A673 (cell line): ENCODE measurements at regions of chr16 and their contacts with region 1.

Region 1: GRCh38 chr16:89700100-89700648 is 1.3 kb downstream of the SPATA2L start:
- DNase-seq: peak; percentile 97
- H3K4me3 ChIP-seq: peak overlapping the region; percentile 80
- H3K27ac ChIP-seq: peak overlapping the region; percentile 76
- H3K4me1 ChIP-seq: peaks cover 10% of the 10 kb centered on the region
- H3K27me3 ChIP-seq: no peaks in the 10 kb centered on the region
- CTCF ChIP-seq: peak; percentile 52

Region 2: DNA sequence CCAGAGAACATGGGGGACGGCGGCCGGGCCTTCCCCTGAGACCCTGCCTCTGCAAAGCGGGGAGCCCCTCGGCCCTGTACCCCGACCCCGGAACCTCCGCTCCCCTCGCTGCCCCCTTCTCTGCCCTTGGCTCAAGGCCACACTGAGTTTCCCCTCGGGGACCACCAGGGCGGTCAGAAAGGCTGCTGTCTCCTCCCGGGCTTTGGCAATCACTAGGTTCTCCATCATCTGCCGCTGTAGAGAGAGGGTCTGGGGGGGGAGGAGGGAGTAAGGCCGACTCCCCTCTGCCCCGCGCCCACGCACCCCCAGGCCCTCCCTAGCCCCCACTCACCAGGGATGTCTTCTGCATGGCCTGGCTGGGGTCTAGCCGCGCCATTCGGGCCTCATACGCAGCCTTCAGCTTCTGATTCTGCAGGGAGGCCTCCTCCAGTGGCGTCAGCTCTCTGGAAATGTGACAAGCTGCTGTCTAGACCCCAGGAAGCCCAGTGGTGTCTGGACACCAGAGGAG is 12.2 kb after region 1 on chr16:
- CTCF ChIA-PET with region 1: interaction called, 7 read pairs
- POLR2A ChIA-PET with region 1: interaction called, 20 read pairs
- intact Hi-C with region 1: no loop called
- DNase-seq: no peak
- H3K4me3 ChIP-seq: peak overlapping the region; percentile 98
- H3K27ac ChIP-seq: peak overlapping the region; percentile 80
- H3K4me1 ChIP-seq: peaks cover 5% of the 10 kb centered on the region
- H3K27me3 ChIP-seq: no peaks in the 10 kb centered on the region
- CTCF ChIP-seq: no peak

Region 3: GRCh38 chr16:89791278-89791995 is 91.3 kb after region 1 on chr16:
- CTCF ChIA-PET with region 1: no interaction called
- POLR2A ChIA-PET with region 1: no interaction called
- intact Hi-C with region 1: no loop called
- DNase-seq: no peak
- H3K4me3 ChIP-seq: no peak overlapping the region
- H3K27ac ChIP-seq: no peak overlapping the region
- H3K4me1 ChIP-seq: no peaks in the 10 kb centered on the region
- H3K27me3 ChIP-seq: no peaks in the 10 kb centered on the region
- CTCF ChIP-seq: no peak

Region 4: DNA sequence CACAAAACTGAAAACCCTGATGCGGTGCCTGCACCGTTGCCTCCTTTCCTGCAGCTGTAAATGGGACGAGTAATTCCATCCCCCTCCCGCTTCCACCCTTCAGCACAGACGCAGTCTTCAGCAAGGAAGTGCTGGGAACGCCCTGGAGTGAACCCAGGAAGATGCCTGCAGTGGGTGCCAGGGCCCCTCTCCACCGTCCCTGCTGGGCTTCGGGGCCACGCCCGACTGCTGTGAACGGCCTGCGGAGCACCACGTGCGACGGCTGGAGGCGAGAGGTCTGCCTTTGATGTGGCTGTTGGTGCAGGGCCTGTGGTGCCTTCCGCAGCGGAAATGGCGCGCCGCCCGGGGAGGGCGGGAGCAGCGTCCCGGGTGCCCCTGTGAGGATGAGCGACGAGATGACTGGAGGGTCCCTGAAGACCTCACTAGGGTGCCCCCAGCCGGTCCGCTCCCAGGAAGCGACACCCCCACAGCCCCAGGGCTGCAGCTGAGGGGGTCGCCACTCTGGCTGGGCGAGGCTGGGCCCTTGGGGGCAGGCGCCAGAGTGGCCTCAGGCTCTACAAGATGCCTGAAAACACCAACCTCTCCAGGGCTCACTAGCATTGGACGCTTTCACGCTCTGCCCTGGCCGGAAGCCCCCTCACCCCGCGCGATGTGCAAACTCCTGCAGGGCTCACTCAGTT is 217.7 kb after region 1 on chr16:
- CTCF ChIA-PET with region 1: no interaction called
- POLR2A ChIA-PET with region 1: no interaction called
- intact Hi-C with region 1: loop called (anchors 10 kb)
- DNase-seq: peak; percentile 93
- H3K4me3 ChIP-seq: peak overlapping the region; percentile 37
- H3K27ac ChIP-seq: peak overlapping the region; percentile 68
- H3K4me1 ChIP-seq: peaks cover 33% of the 10 kb centered on the region
- H3K27me3 ChIP-seq: no peaks in the 10 kb centered on the region
- CTCF ChIP-seq: no peak

Region 5: DNA sequence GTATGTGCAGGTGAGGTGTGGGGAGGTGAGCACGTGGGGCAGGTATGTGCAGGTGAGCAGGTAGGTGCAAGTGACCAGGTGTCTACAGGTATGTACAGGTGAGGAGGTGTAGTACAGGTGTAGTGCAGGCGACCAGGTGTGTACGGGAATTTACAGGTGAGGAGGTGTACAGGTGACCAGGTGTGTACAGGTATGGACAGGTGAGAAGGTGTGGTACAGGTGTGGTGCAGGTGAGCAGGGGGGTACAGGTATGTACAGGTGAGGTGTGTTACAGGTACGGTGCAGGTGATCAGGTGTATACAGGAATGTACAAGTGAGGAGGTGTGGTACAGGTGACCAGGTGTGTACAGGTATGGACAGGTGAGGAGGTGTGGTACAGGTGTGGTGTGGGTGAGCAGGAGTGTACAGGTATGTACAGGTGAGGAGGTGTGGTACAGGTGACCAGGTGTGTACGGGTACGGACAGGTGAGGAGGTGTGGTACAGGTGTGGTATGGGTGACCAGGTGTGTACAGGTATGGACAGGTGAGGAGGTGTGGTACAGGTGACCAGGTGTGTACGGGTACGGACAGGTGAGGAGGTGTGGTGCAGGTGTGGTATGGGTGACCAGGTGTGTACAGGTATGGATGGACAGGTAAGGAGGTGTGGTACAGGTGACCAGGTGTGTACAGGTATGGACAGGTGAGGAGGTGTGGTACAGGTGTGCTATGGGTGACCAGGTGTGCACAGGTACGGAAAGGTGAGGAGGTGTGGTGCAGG is 331.9 kb after region 1 on chr16:
- CTCF ChIA-PET with region 1: no interaction called
- POLR2A ChIA-PET with region 1: no interaction called
- intact Hi-C with region 1: no loop called
- DNase-seq: peak; percentile 41
- H3K4me3 ChIP-seq: no peak overlapping the region
- H3K27ac ChIP-seq: no peak overlapping the region
- H3K4me1 ChIP-seq: no peaks in the 10 kb centered on the region
- H3K27me3 ChIP-seq: no peaks in the 10 kb centered on the region
- CTCF ChIP-seq: no peak